ENCODE measurements at regions of chr4 and their contacts with region 1.

Region 1: GRCh38 chr4:37666625-37667071 is 19.5 kb downstream of the RELL1 start:
- DNase-seq: peak in 3 of 5 donors; percentile 43 to 73 (median 51)
- ATAC-seq: peak; percentile 39 to 76 (median 70)
- H3K4me3 ChIP-seq: no peak overlapping the region
- H3K27ac ChIP-seq: peak overlapping the region; percentile 50 to 83 (median 68)
- H3K4me1 ChIP-seq: peaks cover 27 to 77% (median 63%) of the 10 kb centered on the region in 12 donors
- H3K27me3 ChIP-seq: no peaks in the 10 kb centered on the region
- CTCF ChIP-seq: peak in 3 of 12 donors; percentile 7 to 15 (median 15)
- POLR2A ChIP-seq: no peak

Region 2: GRCh38 chr4:37648096-37648817 is 18.4 kb before region 1 on chr4:
- intact Hi-C with region 1: loop called in 1 of 10 experiments (anchors 1 kb)
- DNase-seq: peak in 4 of 5 donors; percentile 48 to 90 (median 72)
- ATAC-seq: peak; percentile 91 to 98 (median 95)
- H3K4me3 ChIP-seq: no peak overlapping the region
- H3K27ac ChIP-seq: peak overlapping the region in 9 of 12 donors; percentile 31 to 74 (median 58)
- H3K4me1 ChIP-seq: peaks cover 0 to 27% (median 11%) of the 10 kb centered on the region in 12 donors
- H3K27me3 ChIP-seq: no peaks in the 10 kb centered on the region
- CTCF ChIP-seq: no peak
- POLR2A ChIP-seq: no peak

Measured in heart left ventricle (tissue), 16 donors.